Body of pancreas (tissue), 4 donors: ENCODE measurements at regions of chr5 and their contacts with region 1.

Region 1: GRCh38 chr5:83564069-83564749 is 92.7 kb downstream of the VCAN start:
- DNase-seq: no peak
- ATAC-seq: peak; percentile 66
- H3K4me3 ChIP-seq: no peak overlapping the region
- H3K27ac ChIP-seq: no peak overlapping the region
- H3K4me1 ChIP-seq: peaks cover 14% of the 10 kb centered on the region
- H3K27me3 ChIP-seq: no peaks in the 10 kb centered on the region
- CTCF ChIP-seq: peak; percentile 20 to 80 (median 77)
- POLR2A ChIP-seq: no peak

Region 2: GRCh38 chr5:82349651-82350050 is 1214.6 kb before region 1 on chr5:
- intact Hi-C with region 1: loop called (anchors 5 kb)
- DNase-seq: no peak
- ATAC-seq: no peak
- H3K4me3 ChIP-seq: no peak overlapping the region
- H3K27ac ChIP-seq: no peak overlapping the region
- H3K4me1 ChIP-seq: peaks cover 11% of the 10 kb centered on the region
- H3K27me3 ChIP-seq: no peaks in the 10 kb centered on the region
- CTCF ChIP-seq: peak in 3 of 7 experiments; percentile 12 to 26 (median 19)
- POLR2A ChIP-seq: no peak

Region 3: GRCh38 chr5:82641331-82642003 is 922.7 kb before region 1 on chr5:
- intact Hi-C with region 1: loop called (anchors 10 kb)
- DNase-seq: peak; percentile 83 to 89 (median 86)
- ATAC-seq: peak; percentile 98
- H3K4me3 ChIP-seq: no peak overlapping the region
- H3K27ac ChIP-seq: no peak overlapping the region
- H3K4me1 ChIP-seq: peaks cover 9% of the 10 kb centered on the region
- H3K27me3 ChIP-seq: no peaks in the 10 kb centered on the region
- CTCF ChIP-seq: peak; percentile 39 to 96 (median 89)
- POLR2A ChIP-seq: no peak

Region 4: GRCh38 chr5:83294246-83294645 is 270.0 kb before region 1 on chr5:
- intact Hi-C with region 1: no loop called
- DNase-seq: no peak
- ATAC-seq: no peak
- H3K4me3 ChIP-seq: no peak overlapping the region
- H3K27ac ChIP-seq: no peak overlapping the region
- H3K4me1 ChIP-seq: peaks cover 7% of the 10 kb centered on the region
- H3K27me3 ChIP-seq: no peaks in the 10 kb centered on the region
- CTCF ChIP-seq: no peak
- POLR2A ChIP-seq: no peak

Region 5: DNA sequence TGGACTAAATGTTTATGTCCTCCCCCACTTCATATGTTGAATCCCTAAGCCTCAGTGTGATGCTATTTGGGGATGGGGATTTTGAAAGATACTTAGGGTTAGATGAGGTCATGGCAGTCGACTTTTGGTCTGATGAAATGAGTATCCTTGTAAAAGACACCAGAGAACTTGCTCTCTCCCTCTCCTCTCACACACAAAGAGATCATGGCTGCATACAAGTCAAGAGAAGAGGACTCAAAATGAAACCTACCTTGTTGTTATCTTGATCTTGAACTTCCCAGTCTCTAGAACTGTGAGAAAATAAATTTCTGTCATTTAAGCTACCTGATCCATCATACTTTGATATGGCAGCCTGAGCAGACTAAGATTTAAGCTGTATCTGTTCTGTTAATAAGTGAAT is 300.4 kb after region 1 on chr5:
- intact Hi-C with region 1: no loop called
- DNase-seq: no peak
- ATAC-seq: no peak
- H3K4me3 ChIP-seq: no peak overlapping the region
- H3K27ac ChIP-seq: no peak overlapping the region
- H3K4me1 ChIP-seq: no peaks in the 10 kb centered on the region
- H3K27me3 ChIP-seq: no peaks in the 10 kb centered on the region
- CTCF ChIP-seq: no peak
- POLR2A ChIP-seq: no peak